PC-9 (cell line): ENCODE measurements at regions of chr20 and their contacts with region 1.

Region 1: GRCh38 chr20:53883098-53883811 is 187.1 kb downstream of the BCAS1 start:
- DNase-seq: peak in 1 of 2 experiments; percentile 78
- H3K4me3 ChIP-seq: no peak overlapping the region
- H3K27ac ChIP-seq: peak overlapping the region; percentile 44
- H3K4me1 ChIP-seq: peaks cover 26% of the 10 kb centered on the region
- H3K27me3 ChIP-seq: no peaks in the 10 kb centered on the region
- CTCF ChIP-seq: no peak

Region 2: GRCh38 chr20:53894707-53895393 is 11.6 kb after region 1 on chr20:
- CTCF ChIA-PET with region 1: interaction called, 12 read pairs
- POLR2A ChIA-PET with region 1: no interaction called
- intact Hi-C with region 1: no loop called
- DNase-seq: no peak
- H3K4me3 ChIP-seq: no peak overlapping the region
- H3K27ac ChIP-seq: no peak overlapping the region
- H3K4me1 ChIP-seq: peaks cover 28% of the 10 kb centered on the region
- H3K27me3 ChIP-seq: no peaks in the 10 kb centered on the region
- CTCF ChIP-seq: no peak

Region 3: GRCh38 chr20:54103067-54103761 is 220.0 kb after region 1 on chr20:
- CTCF ChIA-PET with region 1: interaction called, 13 read pairs
- POLR2A ChIA-PET with region 1: no interaction called
- intact Hi-C with region 1: no loop called
- DNase-seq: peak in 1 of 2 experiments; percentile 51
- H3K4me3 ChIP-seq: no peak overlapping the region
- H3K27ac ChIP-seq: no peak overlapping the region
- H3K4me1 ChIP-seq: no peaks in the 10 kb centered on the region; the same call in 1 of the 2 replicates
- H3K27me3 ChIP-seq: no peaks in the 10 kb centered on the region
- CTCF ChIP-seq: peak; percentile 62